ENCODE measurements at regions of chr22 and their contacts with region 1.

Region 1: DNA sequence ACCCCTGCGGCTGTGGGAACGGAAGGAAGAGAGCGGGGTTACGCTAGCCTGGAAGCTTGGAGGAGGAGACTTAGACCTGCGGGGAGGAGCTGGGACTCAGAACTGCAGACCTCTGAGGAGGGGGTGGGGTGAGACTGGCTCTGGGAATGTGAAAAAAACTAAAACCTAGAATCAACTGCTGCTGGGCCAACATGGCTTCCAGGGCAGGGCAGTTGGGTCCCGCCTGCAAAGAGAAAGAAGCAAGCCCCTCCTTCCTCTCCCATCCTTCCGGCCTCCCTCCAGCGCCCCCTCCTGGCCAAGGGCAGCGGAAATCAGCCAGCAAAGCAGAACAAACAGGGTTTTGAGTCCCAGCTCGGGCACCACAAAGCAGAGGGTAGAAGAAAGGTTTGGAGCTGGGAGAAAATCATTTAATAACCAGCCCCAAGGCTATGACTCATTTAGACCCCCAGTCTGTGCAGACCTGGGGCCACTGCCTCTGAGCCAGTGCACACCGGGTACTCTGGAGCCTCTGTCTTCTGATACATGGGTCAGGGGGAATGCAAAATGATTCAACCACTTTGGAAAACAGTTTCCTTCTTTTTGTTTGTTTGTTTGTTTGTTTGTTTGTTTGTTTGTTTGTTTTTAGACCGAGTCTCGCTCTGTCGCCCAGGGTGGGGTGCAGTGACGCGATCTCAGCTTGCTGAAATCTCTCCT is 7.3 kb upstream of the NCF4 start:
- DNase-seq: peak; percentile 96
- ATAC-seq: peak; percentile 76
- H3K4me3 Mint-ChIP-seq: peak overlapping the region; percentile 68
- H3K27ac Mint-ChIP-seq: peak overlapping the region; percentile 88
- H3K4me1 Mint-ChIP-seq: peaks cover 19% of the 10 kb centered on the region
- H3K27me3 Mint-ChIP-seq: peaks cover 6% of the 10 kb centered on the region

Region 2: GRCh38 chr22:36781656-36782627 is 71.6 kb before region 1 on chr22:
- POLR2A ChIA-PET with region 1: interaction called, 10 read pairs
- DNase-seq: peak; percentile 94
- ATAC-seq: peak; percentile 96
- H3K4me3 Mint-ChIP-seq: peak overlapping the region; percentile 43
- H3K27ac Mint-ChIP-seq: peak overlapping the region; percentile 87
- H3K4me1 Mint-ChIP-seq: peaks cover 25% of the 10 kb centered on the region
- H3K27me3 Mint-ChIP-seq: peaks cover 9% of the 10 kb centered on the region